H1 (cell line): ENCODE measurements at regions of chr2 and their contacts with region 1.

Region 1: GRCh38 chr2:196068271-196069209 is at the start of gene DNAH7:
- DNase-seq: peak; percentile 65 to 95
- H3K4me3 ChIP-seq: peak within 1 kb of the TSS; percentile 51 to 92 (median 86)
- H3K27ac ChIP-seq: 0 out of 2 replicates have a peak within 1 kb of the TSS, but pooled peaks have one; percentile 53
- H3K4me1 ChIP-seq: peaks cover 0 to 2% (median 1%) of the 10 kb centered on the region in 4 experiments; a peak in 1 of 7 replicates
- H3K27me3 ChIP-seq: peaks cover 0 to 5% (median 0%) of the 10 kb centered on the region in 4 experiments; a peak in 1 of 7 replicates
- CTCF ChIP-seq: peak; percentile 91 to 97 (median 95)
- EP300 ChIP-seq: peak in 1 of 2 experiments; percentile 33; a peak in 1 of 3 replicates
- POLR2A ChIP-seq: peak in 1 of 2 experiments; percentile 74; a peak in 2 of 3 replicates
- RAD21 ChIP-seq: peak; percentile 86 to 94
- total RNA-seq, gene DNAH7: 0.07 and 0.21 TPM in 2 replicates

Region 2: GRCh38 chr2:196046123-196046917 is 22.2 kb before region 1 on chr2:
- CTCF ChIA-PET with region 1: interaction called, 16 read pairs
- POLR2A ChIA-PET with region 1: no interaction called
- DNase-seq: no peak
- H3K4me3 ChIP-seq: no peak overlapping the region
- H3K27ac ChIP-seq: no peak overlapping the region
- H3K4me1 ChIP-seq: no peaks in the 10 kb centered on the region
- H3K27me3 ChIP-seq: no peaks in the 10 kb centered on the region
- CTCF ChIP-seq: no peak
- EP300 ChIP-seq: no peak
- POLR2A ChIP-seq: no peak
- RAD21 ChIP-seq: no peak

Region 3: DNA sequence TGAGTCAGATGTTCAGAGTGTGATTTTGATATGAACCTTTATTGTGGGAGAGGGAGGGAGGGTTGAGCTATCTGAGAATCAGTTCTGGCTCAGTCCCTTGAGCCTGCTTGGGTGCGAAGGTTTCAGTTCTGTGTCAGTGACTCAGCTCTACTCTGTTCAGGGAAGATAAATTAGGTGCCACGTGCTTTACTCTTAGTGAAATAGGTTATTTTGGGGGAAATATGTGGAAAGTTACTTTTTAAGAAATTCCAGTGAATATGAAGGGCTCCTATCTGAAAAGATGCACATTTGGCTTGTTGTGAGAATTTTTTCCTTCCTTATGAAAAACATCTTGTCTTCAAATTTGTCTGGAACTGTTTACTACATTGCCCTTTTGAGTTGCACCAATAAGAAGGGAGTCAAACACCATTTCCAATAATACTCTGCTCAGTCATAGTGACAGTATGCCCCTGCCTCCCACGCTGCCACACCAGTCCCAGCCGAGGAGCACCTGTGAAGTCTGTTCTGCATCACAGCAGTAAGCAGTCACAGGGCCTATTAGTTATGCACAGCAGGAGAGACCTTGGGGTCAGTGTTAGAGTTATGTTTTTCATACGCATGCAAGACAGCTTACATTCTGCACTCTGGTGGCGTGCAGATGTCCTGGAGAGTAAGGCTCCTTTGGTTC is 32.9 kb after region 1 on chr2:
- CTCF ChIA-PET with region 1: interaction called, 11 read pairs
- POLR2A ChIA-PET with region 1: no interaction called
- DNase-seq: no peak
- H3K4me3 ChIP-seq: no peak overlapping the region
- H3K27ac ChIP-seq: no peak overlapping the region
- H3K4me1 ChIP-seq: peaks cover 4 to 10% (median 5%) of the 10 kb centered on the region in 4 experiments; a peak in 5 of 7 replicates
- H3K27me3 ChIP-seq: no peaks in the 10 kb centered on the region
- CTCF ChIP-seq: no peak
- EP300 ChIP-seq: no peak
- POLR2A ChIP-seq: no peak
- RAD21 ChIP-seq: no peak

Region 4: DNA sequence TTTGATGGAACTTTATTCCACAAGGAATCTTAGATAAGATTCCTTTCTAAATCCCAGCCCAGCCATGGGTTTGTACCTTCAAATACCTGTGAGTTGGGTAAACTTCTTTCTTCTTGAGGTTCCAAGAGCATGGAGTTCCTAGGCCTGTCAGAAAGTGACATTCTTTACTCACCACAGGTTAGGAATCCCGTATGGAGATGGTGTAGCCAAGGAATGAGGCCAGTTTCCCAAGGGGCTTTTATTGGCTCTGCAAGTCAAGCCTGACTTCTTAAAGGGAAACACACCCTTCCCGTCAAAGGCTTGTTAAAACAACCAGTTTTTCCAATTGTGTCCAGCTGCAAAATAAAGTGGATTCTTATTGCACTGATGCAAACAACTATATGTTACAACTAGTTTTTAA is 57.1 kb after region 1 on chr2:
- CTCF ChIA-PET with region 1: no interaction called
- POLR2A ChIA-PET with region 1: no interaction called
- DNase-seq: no peak
- H3K4me3 ChIP-seq: no peak overlapping the region
- H3K27ac ChIP-seq: no peak overlapping the region
- H3K4me1 ChIP-seq: no peaks in the 10 kb centered on the region
- H3K27me3 ChIP-seq: no peaks in the 10 kb centered on the region
- CTCF ChIP-seq: no peak
- EP300 ChIP-seq: no peak
- POLR2A ChIP-seq: no peak
- RAD21 ChIP-seq: no peak